Activated B cell treated with CpG ODN at 0.5 μM for 24 hours (primary cell): ENCODE measurements at regions of chr19 and their contacts with region 1.

Region 1: GRCh38 chr19:18029617-18030338 is 21.8 kb downstream of the ARRDC2 start:
- DNase-seq: no peak
- ATAC-seq: no peak
- H3K4me3 Mint-ChIP-seq: no peak overlapping the region
- H3K27ac Mint-ChIP-seq: peak overlapping the region; percentile 24
- H3K4me1 Mint-ChIP-seq: peaks cover 31% of the 10 kb centered on the region
- H3K27me3 Mint-ChIP-seq: no peaks in the 10 kb centered on the region
- CTCF ChIP-seq: no peak

Region 2: GRCh38 chr19:17680235-17680722 is 349.5 kb before region 1 on chr19:
- CTCF ChIA-PET with region 1: no interaction called
- POLR2A ChIA-PET with region 1: no interaction called
- intact Hi-C with region 1: no loop called
- DNase-seq: peak; percentile 61
- ATAC-seq: peak; percentile 90
- H3K4me3 Mint-ChIP-seq: peak overlapping the region; percentile 73
- H3K27ac Mint-ChIP-seq: peak overlapping the region; percentile 30
- H3K4me1 Mint-ChIP-seq: peaks cover 14% of the 10 kb centered on the region
- H3K27me3 Mint-ChIP-seq: peaks cover 55% of the 10 kb centered on the region
- CTCF ChIP-seq: no peak

Region 3: GRCh38 chr19:18044825-18045304 is 15.1 kb after region 1 on chr19:
- CTCF ChIA-PET with region 1: interaction called, 17 read pairs
- POLR2A ChIA-PET with region 1: interaction called, 779 read pairs
- intact Hi-C with region 1: loop called (anchors 1 kb)
- DNase-seq: peak; percentile 72
- ATAC-seq: peak; percentile 92
- H3K4me3 Mint-ChIP-seq: peak overlapping the region; percentile 78
- H3K27ac Mint-ChIP-seq: peak overlapping the region; percentile 96
- H3K4me1 Mint-ChIP-seq: peaks cover 55% of the 10 kb centered on the region
- H3K27me3 Mint-ChIP-seq: no peaks in the 10 kb centered on the region
- CTCF ChIP-seq: no peak